Activated T-helper 1 cell treated with anti-CD3 and anti-CD28 coated beads, Interleukin-12 subunit alpha, Interleukin-12 subunit beta, Interleukin-2, Interleukin-4 antibody, amounts not matched to agents 30 ng/mL and 10 ng/mL and 1 ng/mL, durations not matched to agents 14 hours and 24 hours and 36 hours (primary cell): ENCODE measurements at regions of chr6 and their contacts with region 1.

Region 1: DNA sequence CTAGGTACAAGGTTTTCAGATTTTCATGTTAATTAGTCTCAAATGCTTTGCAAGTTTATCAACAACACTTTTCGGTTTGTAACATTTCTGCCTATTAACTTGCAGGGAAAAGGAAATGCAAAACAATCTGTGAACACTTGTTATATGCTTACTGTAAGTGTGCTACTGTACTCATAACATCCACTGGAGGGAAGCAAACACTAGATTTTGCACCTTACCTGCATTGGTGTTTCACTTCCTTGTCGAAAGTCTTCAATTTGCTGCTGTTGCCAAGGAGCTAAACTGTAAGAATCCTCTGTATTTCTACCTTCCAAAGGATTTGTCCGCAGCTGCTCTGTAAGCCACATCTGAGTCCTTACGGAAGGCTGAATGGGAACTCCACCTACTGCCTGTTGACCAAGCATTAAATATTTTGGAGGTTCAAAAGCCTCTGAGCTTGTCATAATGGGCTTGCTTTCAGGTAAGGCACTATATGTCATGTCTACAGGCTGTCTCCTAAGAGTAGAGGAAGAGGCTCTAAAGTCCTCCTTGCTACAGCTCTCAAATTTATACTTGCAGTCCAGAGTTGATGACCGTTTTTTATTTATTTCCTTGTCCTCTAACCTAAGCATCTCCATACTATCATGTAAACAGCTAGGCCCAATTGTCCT is 17.3 kb downstream of the PLN start:
- DNase-seq: no peak
- H3K4me3 Mint-ChIP-seq: no peak overlapping the region
- H3K27ac Mint-ChIP-seq: peak overlapping the region; percentile 9
- H3K4me1 Mint-ChIP-seq: peaks cover 34% of the 10 kb centered on the region
- H3K27me3 Mint-ChIP-seq: no peaks in the 10 kb centered on the region

Region 2: GRCh38 chr6:118269659-118270058 is 295.8 kb before region 1 on chr6:
- intact Hi-C with region 1: no loop called
- DNase-seq: no peak
- H3K4me3 Mint-ChIP-seq: no peak overlapping the region
- H3K27ac Mint-ChIP-seq: no peak overlapping the region
- H3K4me1 Mint-ChIP-seq: no peaks in the 10 kb centered on the region
- H3K27me3 Mint-ChIP-seq: peaks cover 5% of the 10 kb centered on the region

Region 3: GRCh38 chr6:118580585-118581419 is 15.4 kb after region 1 on chr6:
- intact Hi-C with region 1: loop called (anchors 2 kb)
- DNase-seq: no peak
- H3K4me3 Mint-ChIP-seq: no peak overlapping the region
- H3K27ac Mint-ChIP-seq: no peak overlapping the region
- H3K4me1 Mint-ChIP-seq: no peaks in the 10 kb centered on the region
- H3K27me3 Mint-ChIP-seq: no peaks in the 10 kb centered on the region

Region 4: GRCh38 chr6:118618679-118619377 is 53.4 kb after region 1 on chr6:
- intact Hi-C with region 1: loop called (anchors 1 kb)
- DNase-seq: peak; percentile 30
- H3K4me3 Mint-ChIP-seq: no peak overlapping the region
- H3K27ac Mint-ChIP-seq: peak overlapping the region; percentile 55
- H3K4me1 Mint-ChIP-seq: peaks cover 29% of the 10 kb centered on the region
- H3K27me3 Mint-ChIP-seq: no peaks in the 10 kb centered on the region

Region 5: GRCh38 chr6:118776607-118777549 is 211.4 kb after region 1 on chr6:
- intact Hi-C with region 1: loop called (anchors 1 kb)
- DNase-seq: peak; percentile 55
- H3K4me3 Mint-ChIP-seq: no peak overlapping the region
- H3K27ac Mint-ChIP-seq: no peak overlapping the region
- H3K4me1 Mint-ChIP-seq: peaks cover 14% of the 10 kb centered on the region
- H3K27me3 Mint-ChIP-seq: peaks cover 8% of the 10 kb centered on the region